ENCODE measurements at regions of chr19 and their contacts with region 1.

Region 1: DNA sequence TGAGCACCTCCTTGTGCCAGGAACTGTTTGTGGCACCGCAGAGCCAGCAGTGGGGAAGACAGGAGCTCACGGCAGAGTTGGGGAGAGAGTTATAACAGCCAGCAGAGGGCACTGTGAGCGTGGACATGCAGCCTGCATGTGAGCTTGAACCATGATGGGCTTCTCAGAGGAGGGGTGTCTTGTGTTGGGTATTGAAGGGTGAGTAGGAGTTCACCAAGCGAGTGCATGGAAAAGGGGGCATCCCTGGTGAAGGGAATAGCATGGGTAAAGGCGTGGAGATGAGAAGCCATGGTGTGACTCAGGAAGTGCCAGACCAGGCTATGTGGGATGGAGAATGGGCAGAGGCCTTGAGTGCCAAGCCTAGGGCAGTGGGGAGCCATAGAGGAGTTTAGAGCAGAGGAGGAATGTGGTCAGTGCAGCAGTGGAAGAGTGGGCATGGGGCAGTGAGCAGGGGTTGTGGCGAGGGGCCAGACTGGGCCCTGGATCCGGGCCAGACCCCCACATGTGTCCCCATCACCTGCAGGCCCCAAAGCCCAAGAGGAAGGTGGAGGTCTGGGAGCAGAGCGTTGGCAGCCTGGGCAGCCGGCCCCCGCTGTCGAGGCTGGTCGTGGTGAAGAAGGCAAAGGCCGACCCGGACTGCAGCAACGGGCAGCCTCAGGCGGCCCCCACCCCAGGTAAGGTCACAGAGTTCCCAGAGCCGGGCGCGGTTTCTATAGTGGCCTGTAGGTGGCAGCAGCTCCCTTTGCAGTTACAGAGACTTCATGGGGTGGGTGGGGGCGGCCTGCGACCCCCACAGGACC is 11.8 kb upstream of the SHD start:
- DNase-seq: no peak

Region 2: DNA sequence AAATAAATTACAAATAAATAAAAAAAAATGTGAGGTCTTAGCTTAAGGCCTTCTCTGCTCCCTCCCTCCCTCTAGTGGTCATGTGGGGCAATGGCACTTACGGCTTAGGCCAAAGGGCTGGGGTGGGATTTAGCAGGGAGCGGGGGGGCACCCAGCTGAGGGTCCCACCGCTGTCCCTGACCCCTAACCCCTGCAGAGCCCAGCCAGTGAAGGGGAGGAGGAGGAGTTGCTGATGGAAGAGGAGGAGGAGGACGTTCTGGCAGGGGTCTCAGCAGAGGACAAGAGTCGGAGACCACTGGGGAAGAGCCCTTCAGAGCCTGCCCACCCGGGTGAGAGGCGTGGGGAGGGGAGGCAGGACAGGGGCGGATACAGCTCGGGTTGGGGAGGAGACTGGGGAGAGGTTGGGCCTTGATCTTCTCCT is 85.4 kb after region 1 on chr19:
- intact Hi-C with region 1: loop called (anchors 5 kb)
- DNase-seq: no peak

Region 3: GRCh38 chr19:4524808-4525562 is 257.7 kb after region 1 on chr19:
- intact Hi-C with region 1: loop called (anchors 5 kb)
- DNase-seq: no peak